Activated CD4-positive, alpha-beta T cell treated with anti-CD3 and anti-CD28 coated beads, Interleukin-2, amount 10 ng/mL, durations not matched to agents 24 days and 14 days (primary cell): ENCODE measurements at regions of chr9 and their contacts with region 1.

Region 1: GRCh38 chr9:26744191-26744965 is 148.2 kb downstream of the CAAP1 start:
- DNase-seq: no peak
- H3K4me3 Mint-ChIP-seq: no peak overlapping the region
- H3K27ac Mint-ChIP-seq: no peak overlapping the region
- H3K4me1 Mint-ChIP-seq: no peaks in the 10 kb centered on the region
- H3K27me3 Mint-ChIP-seq: peaks cover 11% of the 10 kb centered on the region

Region 2: GRCh38 chr9:26856413-26857032 is 112.1 kb after region 1 on chr9:
- intact Hi-C with region 1: loop called (anchors 2 kb)
- DNase-seq: peak; percentile 73
- H3K4me3 Mint-ChIP-seq: no peak overlapping the region
- H3K27ac Mint-ChIP-seq: no peak overlapping the region
- H3K4me1 Mint-ChIP-seq: no peaks in the 10 kb centered on the region
- H3K27me3 Mint-ChIP-seq: no peaks in the 10 kb centered on the region

Region 3: DNA sequence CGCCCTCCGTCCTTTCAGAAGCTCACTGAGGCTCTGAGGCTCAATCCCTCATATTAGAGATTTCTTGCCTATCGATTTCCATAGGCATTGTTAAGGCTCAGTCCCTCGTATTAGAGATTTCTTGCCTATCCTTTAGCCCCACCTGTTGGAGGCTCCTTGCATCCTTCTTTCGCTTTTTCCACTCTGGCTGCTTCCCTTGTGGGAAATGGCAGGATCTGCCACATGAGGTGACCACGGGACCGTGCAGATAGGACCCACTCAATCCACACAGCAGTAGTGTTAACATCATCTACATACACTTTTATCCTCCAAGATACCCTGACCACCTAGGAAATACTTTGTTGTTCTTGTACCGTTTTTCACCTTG is 231.3 kb after region 1 on chr9:
- intact Hi-C with region 1: loop called (anchors 1 kb)
- DNase-seq: peak; percentile 68
- H3K4me3 Mint-ChIP-seq: no peak overlapping the region
- H3K27ac Mint-ChIP-seq: no peak overlapping the region
- H3K4me1 Mint-ChIP-seq: no peaks in the 10 kb centered on the region
- H3K27me3 Mint-ChIP-seq: no peaks in the 10 kb centered on the region

Region 4: GRCh38 chr9:27276193-27277030 is 532.0 kb after region 1 on chr9:
- intact Hi-C with region 1: loop called (anchors 5 kb)
- DNase-seq: peak; percentile 61
- H3K4me3 Mint-ChIP-seq: no peak overlapping the region
- H3K27ac Mint-ChIP-seq: no peak overlapping the region
- H3K4me1 Mint-ChIP-seq: peaks cover 5% of the 10 kb centered on the region
- H3K27me3 Mint-ChIP-seq: peaks cover 6% of the 10 kb centered on the region